ENCODE measurements at regions of chrX and their contacts with region 1.

Region 1: GRCh38 chrX:154986826-154987576 is 35.5 kb downstream of the F8 start:
- H3K4me3 ChIP-seq: no peak overlapping the region
- H3K27ac ChIP-seq: no peak overlapping the region
- H3K4me1 ChIP-seq: no peaks in the 10 kb centered on the region
- CTCF ChIP-seq: no peak

Region 2: GRCh38 chrX:155056877-155057792 is 70.1 kb after region 1 on chrX:
- CTCF ChIA-PET with region 1: interaction called, 67 read pairs
- POLR2A ChIA-PET with region 1: no interaction called
- H3K4me3 ChIP-seq: no peak overlapping the region
- H3K27ac ChIP-seq: no peak overlapping the region
- H3K4me1 ChIP-seq: no peaks in the 10 kb centered on the region
- CTCF ChIP-seq: peak; percentile 80

Measured in HEK293 (cell line).